ENCODE measurements at regions of chr1 and their contacts with region 1.

Region 1: GRCh38 chr1:12384836-12385456 is 155.1 kb downstream of the VPS13D start:
- DNase-seq: peak; percentile 22
- H3K4me3 Mint-ChIP-seq: no peak overlapping the region
- H3K27ac Mint-ChIP-seq: peak overlapping the region; percentile 36
- H3K4me1 Mint-ChIP-seq: peaks cover 42% of the 10 kb centered on the region
- H3K27me3 Mint-ChIP-seq: no peaks in the 10 kb centered on the region

Region 2: GRCh38 chr1:12258272-12258671 is 126.7 kb before region 1 on chr1:
- intact Hi-C with region 1: no loop called
- DNase-seq: no peak
- H3K4me3 Mint-ChIP-seq: no peak overlapping the region
- H3K27ac Mint-ChIP-seq: no peak overlapping the region
- H3K4me1 Mint-ChIP-seq: no peaks in the 10 kb centered on the region
- H3K27me3 Mint-ChIP-seq: no peaks in the 10 kb centered on the region

Region 3: DNA sequence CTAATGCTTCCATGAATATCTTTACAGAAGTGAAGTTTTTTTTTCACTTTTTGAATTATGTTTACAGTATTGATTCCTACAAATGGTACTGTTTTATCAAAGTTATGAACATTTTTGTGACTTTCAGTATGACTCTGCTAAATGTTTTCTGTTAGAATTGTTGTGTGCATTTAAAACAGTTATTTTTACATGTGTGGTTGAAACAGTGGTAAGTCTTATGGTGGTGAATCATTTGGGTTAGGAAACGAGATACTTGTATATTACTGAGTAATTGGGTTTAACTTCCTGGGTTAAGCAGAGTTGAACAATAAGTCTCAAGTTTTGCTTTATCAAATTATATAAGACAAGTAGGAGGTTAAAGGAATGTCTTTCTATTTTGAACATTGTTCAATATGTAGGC is 88.3 kb before region 1 on chr1:
- intact Hi-C with region 1: loop called (anchors 1 kb)
- DNase-seq: no peak
- H3K4me3 Mint-ChIP-seq: peak overlapping the region; percentile 17
- H3K27ac Mint-ChIP-seq: peak overlapping the region; percentile 63
- H3K4me1 Mint-ChIP-seq: peaks cover 40% of the 10 kb centered on the region
- H3K27me3 Mint-ChIP-seq: no peaks in the 10 kb centered on the region

Region 4: DNA sequence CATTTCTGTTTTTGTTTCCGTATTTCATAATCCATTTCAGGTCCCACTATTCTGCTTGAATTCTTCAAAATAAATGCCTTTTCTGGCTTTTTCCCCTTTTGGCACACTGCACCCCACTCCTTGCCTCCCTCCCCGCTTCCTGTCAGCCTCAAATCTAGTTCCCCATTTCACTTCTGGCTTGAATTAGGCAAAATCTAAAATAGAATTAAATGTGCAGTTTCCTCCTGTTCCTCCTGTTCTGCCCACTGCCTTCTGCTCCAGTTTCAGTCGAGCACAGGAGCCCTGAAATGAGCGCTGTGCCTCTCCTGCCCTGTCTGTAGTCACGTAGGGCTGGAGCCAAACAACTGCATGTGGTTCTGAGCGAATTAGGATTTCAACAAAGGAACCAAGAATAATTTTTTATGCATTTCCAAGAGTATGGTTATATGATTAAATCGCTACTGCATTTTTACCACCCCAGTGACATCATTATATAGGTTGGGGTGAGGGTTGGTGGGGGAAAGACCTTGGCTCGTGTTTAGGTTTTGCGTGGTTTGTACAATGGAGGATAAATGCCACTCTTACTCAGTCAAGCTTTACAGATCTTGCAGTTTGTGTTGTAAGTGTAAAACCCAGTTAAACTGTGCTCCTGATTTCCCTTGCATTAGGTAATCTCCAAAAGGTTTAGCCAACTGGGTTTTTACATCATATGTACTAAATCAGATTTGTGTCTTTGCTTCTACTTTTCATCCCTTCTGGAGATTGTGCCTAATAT is 40.2 kb before region 1 on chr1:
- intact Hi-C with region 1: loop called (anchors 1 kb)
- DNase-seq: no peak
- H3K4me3 Mint-ChIP-seq: peak overlapping the region; percentile 61
- H3K27ac Mint-ChIP-seq: peak overlapping the region; percentile 88
- H3K4me1 Mint-ChIP-seq: peaks cover 53% of the 10 kb centered on the region
- H3K27me3 Mint-ChIP-seq: no peaks in the 10 kb centered on the region